Psoas muscle (tissue), 8 donors: ENCODE measurements at regions of chr3 and their contacts with region 1.

Region 1: DNA sequence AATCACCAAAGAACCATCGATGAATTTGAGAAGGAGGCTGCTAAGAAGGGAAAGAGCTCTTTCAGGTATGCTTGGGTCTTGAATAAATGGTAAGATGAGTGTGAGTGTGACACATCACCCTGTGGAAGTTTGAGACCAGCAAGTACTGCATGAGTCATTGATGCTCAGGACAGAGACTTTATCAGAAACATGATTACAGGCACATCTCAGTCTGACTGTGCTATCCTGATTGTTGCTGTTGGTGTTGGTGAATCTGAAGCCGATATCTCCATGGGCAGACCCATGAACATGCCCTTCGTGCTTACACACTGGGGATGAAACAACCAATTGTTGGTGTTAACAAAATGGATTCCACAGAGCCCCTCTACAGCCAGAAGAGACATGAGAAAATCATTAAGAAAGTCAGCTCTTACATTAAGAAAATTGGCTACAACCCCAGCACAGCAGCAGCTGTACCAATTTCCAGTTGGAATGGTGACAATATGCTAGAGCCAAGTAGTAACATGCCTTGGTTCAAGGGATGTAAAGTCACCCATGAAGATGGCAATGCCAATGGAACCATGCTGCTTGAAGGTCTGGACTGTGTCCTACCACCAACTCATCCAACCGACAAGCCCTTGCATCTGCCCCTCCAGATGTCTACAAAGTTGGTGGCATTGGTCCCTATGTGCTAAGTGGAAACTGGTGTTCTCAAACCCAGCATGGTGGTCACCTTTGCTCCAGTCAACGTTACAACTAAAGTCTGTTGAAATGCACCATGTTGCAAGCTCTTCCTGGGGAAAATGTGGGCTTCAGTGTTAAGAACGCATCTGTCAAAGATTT is 20.5 kb downstream of the TM4SF4 start:
- DNase-seq: no peak
- ATAC-seq: peak; percentile 41 to 75 (median 54)
- H3K4me3 ChIP-seq: no peak overlapping the region
- H3K27ac ChIP-seq: no peak overlapping the region
- H3K4me1 ChIP-seq: peaks cover 2% of the 10 kb centered on the region
- H3K27me3 ChIP-seq: no peaks in the 10 kb centered on the region
- CTCF ChIP-seq: no peak

Region 2: DNA sequence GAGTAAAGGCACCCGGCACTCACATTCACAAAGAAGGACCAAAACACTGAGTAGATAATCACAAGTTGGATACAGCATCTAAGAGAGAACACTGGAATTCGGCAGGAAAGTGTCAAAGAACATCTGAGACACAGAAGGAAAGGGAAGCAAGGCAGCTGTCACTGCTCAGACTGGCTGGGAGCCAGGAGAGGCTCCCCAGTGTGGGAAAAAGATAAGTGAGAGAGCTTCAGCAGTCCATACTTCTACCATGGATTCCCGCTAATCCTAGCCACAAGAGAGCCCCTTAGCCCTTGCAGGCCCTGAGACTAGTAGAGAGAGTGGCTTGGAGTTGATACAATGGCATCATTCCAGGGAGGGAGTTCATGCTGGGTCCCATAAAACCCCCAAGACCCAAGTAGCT is 236.7 kb before region 1 on chr3:
- intact Hi-C with region 1: no loop called
- DNase-seq: no peak
- ATAC-seq: no peak
- H3K4me3 ChIP-seq: no peak overlapping the region
- H3K27ac ChIP-seq: no peak overlapping the region
- H3K4me1 ChIP-seq: no peaks in the 10 kb centered on the region
- H3K27me3 ChIP-seq: peaks cover 0 to 2% (median 0%) of the 10 kb centered on the region in 3 donors
- CTCF ChIP-seq: no peak

Region 3: GRCh38 chr3:149299938-149300791 is 194.8 kb before region 1 on chr3:
- intact Hi-C with region 1: no loop called
- DNase-seq: peak in 1 of 2 donors; percentile 28
- ATAC-seq: peak; percentile 78 to 88 (median 86)
- H3K4me3 ChIP-seq: no peak overlapping the region
- H3K27ac ChIP-seq: peak overlapping the region; percentile 75
- H3K4me1 ChIP-seq: peaks cover 37% of the 10 kb centered on the region
- H3K27me3 ChIP-seq: no peaks in the 10 kb centered on the region
- CTCF ChIP-seq: no peak

Region 4: GRCh38 chr3:149771652-149772271 is 276.8 kb after region 1 on chr3:
- intact Hi-C with region 1: loop called in 1 of 2 experiments (anchors 5 kb)
- DNase-seq: no peak
- ATAC-seq: peak in 3 of 4 donors; percentile 52 to 73 (median 57)
- H3K4me3 ChIP-seq: no peak overlapping the region
- H3K27ac ChIP-seq: no peak overlapping the region
- H3K4me1 ChIP-seq: no peaks in the 10 kb centered on the region
- H3K27me3 ChIP-seq: peaks cover 0 to 3% (median 0%) of the 10 kb centered on the region in 3 donors
- CTCF ChIP-seq: peak; percentile 69